Endothelial cell of umbilical vein (primary cell): ENCODE measurements at regions of chr11 and their contacts with region 1.

Region 1: GRCh38 chr11:7657306-7658025 is 15.8 kb downstream of the CYB5R2 start:
- DNase-seq: peak; percentile 75
- H3K4me3 ChIP-seq: no peak overlapping the region
- H3K27ac ChIP-seq: no peak overlapping the region
- H3K4me1 ChIP-seq: no peaks in the 10 kb centered on the region
- H3K27me3 ChIP-seq: no peaks in the 10 kb centered on the region
- CTCF ChIP-seq: peak; percentile 64 to 80
- POLR2A ChIP-seq: no peak

Region 2: DNA sequence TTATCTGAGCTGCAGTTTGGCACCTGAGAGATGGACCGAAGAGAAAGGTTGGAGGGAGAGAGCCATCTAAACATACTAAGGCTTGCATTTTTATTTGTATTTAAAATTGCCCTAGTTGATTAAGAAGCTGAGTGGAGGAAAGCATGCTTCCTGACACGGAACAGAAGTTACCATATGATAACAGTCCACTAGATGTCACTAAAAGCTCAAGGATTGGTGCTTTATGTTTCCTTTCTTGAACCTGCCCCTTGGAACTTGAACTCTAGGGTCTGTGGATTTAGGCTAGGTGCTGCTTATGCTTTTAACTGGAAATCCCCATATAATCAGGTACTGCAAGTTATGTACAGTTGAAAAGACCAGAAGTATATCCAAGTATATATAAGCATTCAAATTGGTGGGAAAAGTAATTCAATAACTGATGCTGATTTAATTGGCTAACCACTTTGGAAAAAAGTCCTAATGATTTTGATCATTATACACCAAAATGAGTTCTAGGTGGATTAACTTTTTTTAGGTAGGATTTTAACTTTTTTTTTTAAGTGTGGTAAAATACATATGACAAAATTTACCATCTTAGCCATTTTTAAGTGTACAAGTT is 559.1 kb before region 1 on chr11:
- CTCF ChIA-PET with region 1: interaction called, 16 read pairs
- POLR2A ChIA-PET with region 1: no interaction called
- dilution Hi-C with region 1: no loop called
- intact Hi-C with region 1: loop called (anchors 1 kb)
- DNase-seq: peak; percentile 67
- H3K4me3 ChIP-seq: no peak overlapping the region
- H3K27ac ChIP-seq: no peak overlapping the region
- H3K4me1 ChIP-seq: no peaks in the 10 kb centered on the region
- H3K27me3 ChIP-seq: peaks cover 0 to 11% of the 10 kb centered on the region in 2 experiments
- CTCF ChIP-seq: peak; percentile 37 to 51
- POLR2A ChIP-seq: no peak

Region 3: GRCh38 chr11:7442588-7443215 is 214.8 kb before region 1 on chr11:
- CTCF ChIA-PET with region 1: interaction called, 30 read pairs
- POLR2A ChIA-PET with region 1: no interaction called
- dilution Hi-C with region 1: no loop called
- intact Hi-C with region 1: loop called (anchors 2 kb)
- DNase-seq: peak; percentile 63
- H3K4me3 ChIP-seq: no peak overlapping the region
- H3K27ac ChIP-seq: no peak overlapping the region
- H3K4me1 ChIP-seq: no peaks in the 10 kb centered on the region
- H3K27me3 ChIP-seq: peaks cover 2 to 11% of the 10 kb centered on the region in 2 experiments
- CTCF ChIP-seq: peak; percentile 78 to 80
- POLR2A ChIP-seq: no peak

Region 4: GRCh38 chr11:7548659-7549274 is 108.7 kb before region 1 on chr11:
- CTCF ChIA-PET with region 1: interaction called, 33 read pairs
- POLR2A ChIA-PET with region 1: no interaction called
- dilution Hi-C with region 1: no loop called
- intact Hi-C with region 1: no loop called
- DNase-seq: no peak
- H3K4me3 ChIP-seq: no peak overlapping the region
- H3K27ac ChIP-seq: no peak overlapping the region
- H3K4me1 ChIP-seq: no peaks in the 10 kb centered on the region
- H3K27me3 ChIP-seq: no peaks in the 10 kb centered on the region
- CTCF ChIP-seq: peak; percentile 11 to 15
- POLR2A ChIP-seq: no peak

Region 5: GRCh38 chr11:7577291-7578190 is 79.9 kb before region 1 on chr11:
- CTCF ChIA-PET with region 1: interaction called, 766 read pairs
- POLR2A ChIA-PET with region 1: interaction called, 4 read pairs
- dilution Hi-C with region 1: no loop called
- intact Hi-C with region 1: no loop called
- DNase-seq: peak; percentile 57
- H3K4me3 ChIP-seq: no peak overlapping the region
- H3K27ac ChIP-seq: no peak overlapping the region
- H3K4me1 ChIP-seq: peaks cover 12% of the 10 kb centered on the region
- H3K27me3 ChIP-seq: peaks cover 37 to 57% of the 10 kb centered on the region in 2 experiments
- CTCF ChIP-seq: no peak
- POLR2A ChIP-seq: no peak

Region 6: DNA sequence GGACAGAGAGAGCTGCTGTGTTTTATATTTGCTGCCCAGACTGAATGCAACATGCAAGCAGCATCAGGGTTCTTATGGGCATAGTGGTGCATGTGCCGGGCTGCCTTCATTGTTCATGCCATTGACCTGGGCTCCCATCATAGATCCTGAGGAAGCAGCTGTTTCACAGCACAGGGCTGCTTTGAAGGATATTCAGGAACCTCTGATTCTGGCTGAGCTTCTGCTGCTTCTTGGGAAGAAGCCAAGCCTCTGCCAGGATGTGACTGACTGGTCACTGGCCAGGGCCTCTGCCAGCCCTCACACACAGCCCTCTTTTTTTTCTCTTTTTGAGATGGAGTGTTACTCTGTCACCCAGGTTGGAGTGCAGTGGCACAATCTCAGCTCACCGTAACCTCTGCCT is 27.5 kb before region 1 on chr11:
- CTCF ChIA-PET with region 1: interaction called, 15 read pairs
- POLR2A ChIA-PET with region 1: no interaction called
- dilution Hi-C with region 1: no loop called
- intact Hi-C with region 1: no loop called
- DNase-seq: peak; percentile 94
- H3K4me3 ChIP-seq: no peak overlapping the region
- H3K27ac ChIP-seq: no peak overlapping the region
- H3K4me1 ChIP-seq: peaks cover 5% of the 10 kb centered on the region
- H3K27me3 ChIP-seq: no peaks in the 10 kb centered on the region
- CTCF ChIP-seq: no peak
- POLR2A ChIP-seq: peak; percentile 35

Region 7: DNA sequence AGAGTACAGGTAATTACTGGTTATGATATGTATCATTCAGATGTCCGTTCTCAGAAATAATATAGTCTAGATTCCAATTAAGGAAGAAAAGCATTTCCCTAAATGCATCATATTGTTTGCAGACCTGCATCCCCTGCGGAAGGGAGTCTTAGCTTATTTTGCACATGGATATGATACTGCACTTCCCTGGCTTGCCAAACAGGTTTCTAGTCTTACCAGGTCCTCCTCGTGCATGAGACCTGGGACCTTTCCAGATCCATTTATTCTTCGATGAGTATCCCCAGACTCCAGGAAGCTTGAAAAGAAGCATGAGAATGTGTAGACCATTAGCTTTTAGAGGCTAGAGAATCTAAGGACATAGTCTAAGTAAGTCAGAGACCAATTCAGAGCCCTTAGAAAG is 14.7 kb before region 1 on chr11:
- CTCF ChIA-PET with region 1: interaction called, 22 read pairs
- POLR2A ChIA-PET with region 1: no interaction called
- dilution Hi-C with region 1: no loop called
- intact Hi-C with region 1: no loop called
- DNase-seq: no peak
- H3K4me3 ChIP-seq: no peak overlapping the region
- H3K27ac ChIP-seq: no peak overlapping the region
- H3K4me1 ChIP-seq: peaks cover 2% of the 10 kb centered on the region
- H3K27me3 ChIP-seq: no peaks in the 10 kb centered on the region
- CTCF ChIP-seq: no peak
- POLR2A ChIP-seq: no peak

Region 8: DNA sequence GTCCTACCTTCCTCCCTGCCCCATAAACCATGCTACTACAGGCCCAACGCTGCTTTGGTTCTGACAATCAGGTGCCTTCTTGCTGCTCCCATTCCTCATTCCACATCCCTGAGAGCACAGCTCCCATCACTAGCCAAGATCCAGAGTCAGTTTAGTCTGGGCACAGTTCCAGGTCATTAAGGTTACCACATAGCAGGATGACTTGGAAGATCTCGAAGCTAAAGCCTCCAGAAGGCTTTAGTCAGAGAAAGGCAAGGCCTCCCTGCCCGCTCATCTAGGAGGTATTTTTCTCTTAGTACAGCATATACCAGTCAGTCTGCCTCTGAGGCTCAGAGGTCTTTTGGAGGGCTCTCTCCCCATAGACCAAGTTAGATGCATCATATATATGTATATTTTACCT is 994.7 kb after region 1 on chr11:
- CTCF ChIA-PET with region 1: no interaction called
- POLR2A ChIA-PET with region 1: no interaction called
- dilution Hi-C with region 1: no loop called
- intact Hi-C with region 1: no loop called
- DNase-seq: no peak
- H3K4me3 ChIP-seq: no peak overlapping the region
- H3K27ac ChIP-seq: no peak overlapping the region
- H3K4me1 ChIP-seq: peaks cover 5% of the 10 kb centered on the region
- H3K27me3 ChIP-seq: no peaks in the 10 kb centered on the region
- CTCF ChIP-seq: no peak
- POLR2A ChIP-seq: no peak